ENCODE measurements at regions of chr12 and their contacts with region 1.

Region 1: GRCh38 chr12:111066744-111067437 is 146.5 kb upstream of the MYL2 start:
- DNase-seq: no peak
- ATAC-seq: no peak
- H3K4me3 ChIP-seq: no peak overlapping the region
- H3K4me3 Mint-ChIP-seq: peak overlapping the region in 1 of 10 donors; percentile 17
- H3K27ac ChIP-seq: no peak overlapping the region
- H3K27ac Mint-ChIP-seq: peak overlapping the region in 4 of 9 donors; percentile 45 to 91 (median 52)
- H3K4me1 ChIP-seq: peaks cover 0 to 16% of the 10 kb centered on the region in 2 donors
- H3K4me1 Mint-ChIP-seq: peaks cover 11 to 31% (median 23%) of the 10 kb centered on the region in 7 donors
- H3K27me3 ChIP-seq: no peaks in the 10 kb centered on the region
- H3K27me3 Mint-ChIP-seq: peaks cover 0 to 15% (median 0%) of the 10 kb centered on the region in 5 donors

Region 2: DNA sequence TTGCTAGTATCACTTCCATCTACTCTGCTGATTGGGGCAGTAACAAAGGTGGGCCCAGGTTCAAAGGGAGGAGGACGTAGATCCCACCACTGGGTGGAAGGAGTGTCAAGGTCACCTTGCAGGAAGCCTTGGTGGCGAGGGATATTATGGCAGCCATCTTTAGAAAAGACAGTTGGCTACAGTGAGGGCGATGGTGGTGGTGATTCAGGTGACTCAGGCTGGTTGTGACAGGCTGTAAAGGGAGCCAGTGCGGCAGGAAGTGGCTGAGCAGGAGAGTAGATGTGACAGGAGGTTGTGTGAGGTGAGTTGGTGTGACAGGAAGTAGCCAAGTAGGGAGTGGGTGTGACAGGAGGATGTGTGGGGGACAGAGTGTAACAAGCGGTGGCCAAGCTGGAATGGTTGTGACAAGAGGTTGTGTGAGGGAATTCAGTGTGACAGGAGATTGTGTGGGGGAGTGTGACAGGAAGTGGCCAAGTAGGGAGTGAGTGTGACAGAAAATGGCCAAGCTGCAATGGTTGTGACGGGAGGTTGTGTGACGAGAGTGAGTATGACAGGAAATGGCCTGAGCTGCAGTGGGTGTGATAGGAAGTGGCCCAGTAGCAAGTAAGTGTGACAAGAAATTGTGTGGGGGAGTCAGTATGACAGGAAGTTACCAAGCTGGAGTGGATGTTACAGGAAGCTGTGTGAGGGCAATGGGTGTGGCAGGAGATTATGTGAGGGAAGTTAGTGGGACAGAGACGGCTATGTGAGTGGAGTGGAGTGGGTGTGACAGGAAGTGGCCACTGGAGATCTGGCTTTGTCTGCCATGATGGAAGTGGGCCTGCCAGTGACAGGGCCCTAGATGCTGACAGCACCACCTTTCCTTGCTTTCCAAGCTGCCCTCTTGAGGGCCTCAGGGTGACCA is 10.0 kb before region 1 on chr12:
- CTCF ChIA-PET with region 1: no interaction called
- POLR2A ChIA-PET with region 1: interaction called, 13 read pairs
- intact Hi-C with region 1: loop called in 1 of 2 experiments (anchors 1 kb)
- DNase-seq: peak in 8 of 9 donors; percentile 38 to 82 (median 70)
- ATAC-seq: peak; percentile 82
- H3K4me3 ChIP-seq: peak overlapping the region; percentile 22
- H3K4me3 Mint-ChIP-seq: peak overlapping the region; percentile 45 to 82 (median 60)
- H3K27ac ChIP-seq: peak overlapping the region; percentile 48
- H3K27ac Mint-ChIP-seq: peak overlapping the region; percentile 90 to 98 (median 97)
- H3K4me1 ChIP-seq: peaks cover 29 to 45% of the 10 kb centered on the region in 2 donors
- H3K4me1 Mint-ChIP-seq: peaks cover 27 to 53% (median 39%) of the 10 kb centered on the region in 7 donors
- H3K27me3 ChIP-seq: no peaks in the 10 kb centered on the region
- H3K27me3 Mint-ChIP-seq: no peaks in the 10 kb centered on the region